Vagina (tissue), 2 donors: ENCODE measurements at regions of chrX and their contacts with region 1.

Region 1: GRCh38 chrX:112614640-112615039 is 65.1 kb downstream of the LHFPL1 start:
- DNase-seq: no peak
- H3K4me3 ChIP-seq: no peak overlapping the region
- H3K27ac ChIP-seq: no peak overlapping the region
- H3K4me1 ChIP-seq: no peaks in the 10 kb centered on the region
- H3K27me3 ChIP-seq: peaks cover 5% of the 10 kb centered on the region
- CTCF ChIP-seq: no peak
- POLR2A ChIP-seq: no peak

Region 2: GRCh38 chrX:114178126-114178525 is 1563.5 kb after region 1 on chrX:
- intact Hi-C with region 1: loop called (anchors 5 kb)
- DNase-seq: no peak
- H3K4me3 ChIP-seq: no peak overlapping the region
- H3K27ac ChIP-seq: no peak overlapping the region
- H3K4me1 ChIP-seq: no peaks in the 10 kb centered on the region
- H3K27me3 ChIP-seq: no peaks in the 10 kb centered on the region
- CTCF ChIP-seq: no peak
- POLR2A ChIP-seq: no peak